ENCODE measurements at regions of chr20 and their contacts with region 1.

Region 1: GRCh38 chr20:3563548-3564177 is 92.8 kb downstream of the ATRN start:
- DNase-seq: peak; percentile 53
- H3K4me3 ChIP-seq: no peak overlapping the region; a peak in 1 of 4 replicates
- H3K27ac ChIP-seq: no peak overlapping the region
- H3K4me1 ChIP-seq: no peaks in the 10 kb centered on the region
- H3K27me3 ChIP-seq: no peaks in the 10 kb centered on the region
- CTCF ChIP-seq: peak; percentile 83
- EP300 ChIP-seq: no peak
- RAD21 ChIP-seq: peak; percentile 85

Region 2: DNA sequence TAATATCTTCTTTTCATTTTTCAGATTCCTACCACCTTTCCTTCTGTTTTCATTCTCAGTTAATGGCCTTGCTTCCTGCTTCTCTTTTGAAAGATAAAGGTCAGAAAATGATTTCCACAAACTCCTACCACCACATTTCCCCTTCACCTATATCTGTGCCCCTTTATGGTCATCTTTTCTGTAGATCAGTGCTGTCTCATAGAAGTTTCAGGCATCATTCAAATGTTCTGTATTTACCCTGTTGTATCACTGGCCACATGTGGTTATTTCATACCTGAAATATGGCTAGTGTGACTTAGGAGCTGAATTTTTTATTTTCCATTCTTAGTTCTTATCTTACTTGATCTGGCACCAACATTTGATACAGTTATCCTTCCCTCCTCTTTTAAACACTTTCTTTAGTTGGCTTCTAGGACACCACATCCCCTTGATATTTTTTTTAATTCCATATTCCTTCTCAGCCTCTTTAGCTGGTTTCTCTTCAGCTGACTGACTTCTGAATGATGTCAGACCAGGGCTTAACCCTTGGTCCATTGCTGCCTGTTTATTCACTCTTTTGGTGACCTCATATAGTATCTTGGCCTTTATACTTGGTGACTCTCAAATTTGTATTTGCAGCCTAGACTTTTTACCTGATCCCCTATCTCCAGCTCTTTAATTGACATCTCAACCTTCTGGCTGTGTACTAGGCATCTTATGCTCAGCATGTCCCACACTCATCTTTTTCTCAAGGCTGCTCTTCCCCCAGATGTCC is 11.8 kb before region 1 on chr20:
- CTCF ChIA-PET with region 1: interaction called, 25 read pairs
- POLR2A ChIA-PET with region 1: no interaction called
- DNase-seq: no peak
- H3K4me3 ChIP-seq: no peak overlapping the region
- H3K27ac ChIP-seq: no peak overlapping the region
- H3K4me1 ChIP-seq: no peaks in the 10 kb centered on the region
- H3K27me3 ChIP-seq: no peaks in the 10 kb centered on the region
- CTCF ChIP-seq: no peak
- EP300 ChIP-seq: no peak
- RAD21 ChIP-seq: no peak

Region 3: DNA sequence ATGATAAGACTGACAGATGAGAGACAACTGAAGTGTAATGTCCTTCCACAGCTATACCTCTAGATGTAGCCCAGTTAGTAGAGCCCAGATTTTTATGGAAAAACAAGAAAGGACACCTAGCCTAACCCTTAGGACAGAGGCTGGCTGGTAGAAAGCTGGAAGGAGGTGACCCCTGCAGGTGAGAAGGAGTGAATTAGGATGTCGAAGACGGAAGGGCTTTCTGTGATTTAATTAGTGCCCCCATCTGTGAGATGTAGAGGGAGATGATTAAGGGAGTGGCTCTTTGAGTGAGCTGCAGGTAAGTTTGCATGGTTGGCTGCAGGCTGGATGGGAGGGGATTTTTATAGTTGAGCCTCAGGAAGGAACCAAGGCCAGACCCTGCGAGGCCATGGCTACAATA is 16.7 kb after region 1 on chr20:
- CTCF ChIA-PET with region 1: interaction called, 26 read pairs
- POLR2A ChIA-PET with region 1: no interaction called
- DNase-seq: no peak
- H3K4me3 ChIP-seq: no peak overlapping the region
- H3K27ac ChIP-seq: no peak overlapping the region
- H3K4me1 ChIP-seq: no peaks in the 10 kb centered on the region
- H3K27me3 ChIP-seq: no peaks in the 10 kb centered on the region
- CTCF ChIP-seq: no peak
- EP300 ChIP-seq: no peak
- RAD21 ChIP-seq: no peak

Region 4: GRCh38 chr20:3652676-3653596 is 89.3 kb after region 1 on chr20:
- CTCF ChIA-PET with region 1: interaction called, 16 read pairs
- POLR2A ChIA-PET with region 1: no interaction called
- DNase-seq: no peak
- H3K4me3 ChIP-seq: no peak overlapping the region
- H3K27ac ChIP-seq: no peak overlapping the region; a peak in 1 of 4 replicates
- H3K4me1 ChIP-seq: peaks cover 0 to 32% of the 10 kb centered on the region in 2 experiments; a peak in 1 of 4 replicates
- H3K27me3 ChIP-seq: no peaks in the 10 kb centered on the region
- CTCF ChIP-seq: no peak
- EP300 ChIP-seq: no peak
- RAD21 ChIP-seq: no peak

Region 5: DNA sequence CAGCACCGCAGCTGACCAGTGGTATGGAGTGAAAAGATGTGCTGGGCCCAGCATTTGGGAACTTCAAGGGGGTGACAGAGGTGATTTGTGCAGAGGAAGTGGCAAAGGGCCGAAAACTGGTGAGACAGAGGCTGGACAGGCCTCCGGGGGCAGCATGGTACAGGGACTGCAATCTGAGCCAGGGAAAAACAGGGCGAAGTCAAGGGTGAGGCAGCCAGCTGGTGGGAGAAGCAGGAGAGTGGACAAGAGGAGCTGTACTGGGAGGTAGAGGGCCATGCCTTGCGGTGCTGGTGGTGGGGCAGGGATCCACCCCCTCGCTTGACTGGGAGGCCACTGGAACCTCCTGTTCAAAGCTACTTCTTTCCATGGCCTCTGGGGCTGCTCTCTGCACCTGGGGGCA is 106.8 kb after region 1 on chr20:
- CTCF ChIA-PET with region 1: interaction called, 20 read pairs
- POLR2A ChIA-PET with region 1: no interaction called
- DNase-seq: peak; percentile 57
- H3K4me3 ChIP-seq: no peak overlapping the region
- H3K27ac ChIP-seq: no peak overlapping the region
- H3K4me1 ChIP-seq: peaks cover 0 to 7% of the 10 kb centered on the region in 2 experiments; a peak in 1 of 4 replicates
- H3K27me3 ChIP-seq: peaks cover 39% of the 10 kb centered on the region
- CTCF ChIP-seq: peak; percentile 49
- EP300 ChIP-seq: no peak
- RAD21 ChIP-seq: no peak

Measured in SK-N-SH (cell line).